ENCODE measurements at regions of chr6 and their contacts with region 1.

Region 1: DNA sequence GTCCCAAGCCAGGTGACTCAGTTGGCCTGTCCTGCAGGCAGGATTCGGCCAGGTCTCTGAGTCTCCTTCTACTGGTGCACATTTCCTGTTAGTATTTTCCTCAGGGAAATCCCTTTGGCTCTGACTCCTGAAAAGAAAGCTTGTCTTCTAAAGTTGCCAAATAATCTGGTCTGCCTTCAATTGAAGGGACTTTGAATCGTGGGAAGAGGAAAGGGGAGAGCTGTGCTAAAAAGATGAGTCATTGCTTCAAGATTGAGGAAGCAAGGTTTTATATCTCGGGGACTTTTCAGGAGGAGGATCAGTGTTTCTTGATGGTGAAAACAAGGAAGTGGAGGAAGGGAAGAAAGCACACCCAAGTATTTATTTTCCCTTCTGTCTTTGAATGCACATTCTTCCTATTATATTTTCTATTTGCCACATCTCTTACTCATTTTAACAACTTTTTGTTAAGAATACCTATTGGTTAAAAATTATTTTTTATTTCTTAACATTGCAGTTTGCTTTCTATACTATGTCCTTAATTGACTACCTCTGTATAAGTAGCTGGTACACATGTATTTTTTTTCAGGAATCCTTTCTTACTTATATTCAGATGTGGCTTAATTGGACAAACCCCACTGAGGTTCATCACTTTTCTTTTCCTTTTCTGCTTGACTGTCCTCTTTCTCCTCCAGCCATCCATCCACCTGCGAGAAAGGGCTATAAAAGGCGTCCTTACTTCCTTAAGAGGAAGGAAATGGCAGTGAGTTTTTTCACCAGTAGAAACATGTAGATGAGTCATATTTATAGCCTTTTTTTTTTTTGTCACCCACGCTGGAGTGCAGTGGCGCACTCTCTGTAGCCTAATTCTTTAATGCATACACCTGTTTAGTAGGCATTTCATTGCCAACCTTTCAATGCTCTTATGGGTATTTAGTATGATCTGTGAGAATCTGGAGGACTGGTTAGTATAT is 15.0 kb upstream of the IFNGR1 start:
- DNase-seq: peak; percentile 29
- H3K4me3 Mint-ChIP-seq: peak overlapping the region; percentile 10
- H3K27ac Mint-ChIP-seq: no peak overlapping the region
- H3K4me1 Mint-ChIP-seq: peaks cover 49% of the 10 kb centered on the region
- H3K27me3 Mint-ChIP-seq: peaks cover 2% of the 10 kb centered on the region

Region 2: GRCh38 chr6:137188855-137189254 is 45.3 kb before region 1 on chr6:
- CTCF ChIA-PET with region 1: no interaction called
- POLR2A ChIA-PET with region 1: no interaction called
- intact Hi-C with region 1: no loop called
- DNase-seq: no peak
- H3K4me3 Mint-ChIP-seq: no peak overlapping the region
- H3K27ac Mint-ChIP-seq: no peak overlapping the region
- H3K4me1 Mint-ChIP-seq: no peaks in the 10 kb centered on the region
- H3K27me3 Mint-ChIP-seq: peaks cover 3% of the 10 kb centered on the region

Region 3: DNA sequence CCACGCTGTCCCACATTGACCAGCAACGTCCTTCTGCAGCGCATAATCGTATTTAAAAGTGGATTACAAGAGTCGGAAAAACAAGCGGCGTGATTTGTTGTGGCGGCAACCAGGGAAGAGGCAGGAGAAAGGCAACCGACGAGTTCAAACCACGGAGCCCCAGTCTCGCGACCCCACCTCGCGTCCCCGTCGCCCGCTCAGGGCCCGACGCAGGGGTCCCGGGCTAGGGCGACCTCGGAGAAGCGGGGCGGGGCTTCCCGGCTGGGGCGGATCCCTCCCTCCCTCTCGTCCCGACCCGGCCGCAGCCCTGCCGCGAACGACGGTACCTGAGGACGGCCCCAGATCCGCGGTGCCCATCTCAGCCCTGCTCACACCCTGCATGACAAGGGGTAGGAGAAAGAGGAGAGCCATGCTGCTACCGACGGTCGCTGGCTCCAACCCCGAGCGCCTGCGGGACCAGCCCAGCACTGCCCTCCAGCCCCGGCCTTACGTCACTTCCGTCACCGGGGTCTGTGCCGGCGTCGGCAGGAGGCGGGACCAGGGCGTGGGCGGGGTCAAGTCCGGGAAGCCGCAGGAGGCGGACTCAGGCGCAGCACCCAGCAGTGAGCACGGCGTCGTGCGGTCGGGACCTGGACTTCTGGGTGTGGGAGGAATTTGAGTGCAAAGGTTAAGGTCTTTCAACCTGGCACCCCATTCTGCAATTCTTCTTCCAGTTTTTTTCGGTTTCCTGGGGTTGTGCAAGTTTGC is 15.1 kb before region 1 on chr6 and contains the start of gene IFNGR1:
- CTCF ChIA-PET with region 1: no interaction called
- POLR2A ChIA-PET with region 1: interaction called, 3 read pairs
- intact Hi-C with region 1: loop called (anchors 1 kb)
- DNase-seq: peak; percentile 98
- H3K4me3 Mint-ChIP-seq: peak within 1 kb of the TSS; percentile 92
- H3K27ac Mint-ChIP-seq: peak within 1 kb of the TSS; percentile 97
- H3K4me1 Mint-ChIP-seq: peaks cover 45% of the 10 kb centered on the region
- H3K27me3 Mint-ChIP-seq: no peaks in the 10 kb centered on the region
- total RNA-seq, gene IFNGR1: 27.7 to 29.0 TPM

Region 4: DNA sequence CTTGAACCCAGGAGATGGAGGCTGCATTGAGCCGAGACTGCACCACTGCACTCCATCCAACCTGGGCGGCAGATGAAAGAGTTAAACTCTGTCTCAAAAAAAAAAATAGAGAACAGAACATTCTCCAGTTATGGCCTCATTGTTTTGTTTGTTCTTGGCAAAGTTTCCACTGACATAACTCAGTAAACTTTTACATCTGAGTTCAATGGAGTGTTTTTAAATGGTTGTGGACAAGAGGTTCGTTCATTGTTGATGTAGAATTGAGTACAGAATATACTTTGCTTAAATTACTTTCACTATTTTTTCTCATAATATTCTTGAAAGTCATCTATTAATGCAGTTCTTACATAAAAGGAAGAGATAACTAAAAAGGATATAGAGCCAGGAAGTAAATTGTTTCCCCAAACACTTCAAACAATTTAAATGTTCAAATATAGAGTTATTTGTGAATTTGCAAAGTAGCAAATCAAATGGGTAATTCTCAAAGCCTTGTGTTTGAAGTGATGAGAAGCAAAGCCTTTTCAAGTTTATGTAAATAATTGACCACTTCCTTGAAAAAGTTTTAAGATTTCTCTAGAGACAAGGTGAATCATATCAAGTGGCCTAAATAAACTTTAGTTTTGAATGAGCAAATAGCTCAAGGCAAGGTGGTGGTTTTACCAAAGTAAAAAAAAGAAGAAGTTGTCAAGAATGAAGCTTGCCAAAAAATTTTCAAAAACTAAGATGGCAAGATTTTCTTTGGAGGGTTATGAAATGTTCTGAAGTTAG is 27.4 kb after region 1 on chr6:
- CTCF ChIA-PET with region 1: no interaction called
- POLR2A ChIA-PET with region 1: no interaction called
- intact Hi-C with region 1: loop called (anchors 1 kb)
- DNase-seq: no peak
- H3K4me3 Mint-ChIP-seq: no peak overlapping the region
- H3K27ac Mint-ChIP-seq: no peak overlapping the region
- H3K4me1 Mint-ChIP-seq: peaks cover 8% of the 10 kb centered on the region
- H3K27me3 Mint-ChIP-seq: peaks cover 2% of the 10 kb centered on the region

Measured in activated CD4-positive, alpha-beta memory T cell treated with anti-CD3 and anti-CD28 coated beads for 36 hours (primary cell).